CD4-positive, alpha-beta memory T cell (primary cell): ENCODE measurements at regions of chr14 and their contacts with region 1.

Region 1: DNA sequence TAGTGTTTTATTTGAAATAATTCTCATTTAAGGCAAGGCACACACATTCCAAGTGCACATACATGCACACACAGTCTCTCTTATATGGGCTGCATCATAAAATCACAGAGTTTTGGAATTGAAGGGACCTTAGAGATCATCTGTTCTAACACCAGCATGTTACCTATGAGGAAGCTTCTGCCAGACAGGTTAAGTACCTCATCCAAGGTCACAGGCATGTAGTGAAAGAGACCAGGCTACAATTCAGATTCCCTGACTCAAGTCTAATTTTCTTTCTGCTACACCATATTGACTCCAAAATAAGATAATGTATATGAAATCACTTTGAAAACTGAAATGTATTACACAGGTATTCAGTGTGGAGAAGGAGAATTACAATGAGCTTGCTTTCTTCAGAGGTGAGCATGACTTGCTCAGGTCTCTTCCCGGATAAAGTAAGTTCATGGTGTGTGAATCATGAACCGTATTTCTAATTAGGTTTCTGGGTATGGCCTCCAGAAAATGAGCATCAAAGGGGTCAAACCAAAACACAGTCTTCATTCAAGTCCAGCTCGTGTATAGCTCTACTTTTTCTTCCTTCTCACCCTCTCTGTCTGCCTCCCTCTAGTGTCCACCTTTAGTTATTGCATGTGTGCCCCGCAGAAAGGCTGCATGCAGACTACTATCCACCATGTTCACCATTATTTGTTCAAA is 411.9 kb downstream of the FUT8 start:
- DNase-seq: peak; percentile 62 to 70 (median 64)
- H3K4me3 ChIP-seq: no peak overlapping the region
- H3K4me3 Mint-ChIP-seq: peak overlapping the region in 1 of 8 donors; percentile 10
- H3K27ac ChIP-seq: no peak overlapping the region
- H3K27ac Mint-ChIP-seq: no peak overlapping the region
- H3K4me1 ChIP-seq: peaks cover 9% of the 10 kb centered on the region
- H3K4me1 Mint-ChIP-seq: peaks cover 10 to 14% (median 11%) of the 10 kb centered on the region in 4 donors
- H3K27me3 ChIP-seq: no peaks in the 10 kb centered on the region
- H3K27me3 Mint-ChIP-seq: no peaks in the 10 kb centered on the region

Region 2: DNA sequence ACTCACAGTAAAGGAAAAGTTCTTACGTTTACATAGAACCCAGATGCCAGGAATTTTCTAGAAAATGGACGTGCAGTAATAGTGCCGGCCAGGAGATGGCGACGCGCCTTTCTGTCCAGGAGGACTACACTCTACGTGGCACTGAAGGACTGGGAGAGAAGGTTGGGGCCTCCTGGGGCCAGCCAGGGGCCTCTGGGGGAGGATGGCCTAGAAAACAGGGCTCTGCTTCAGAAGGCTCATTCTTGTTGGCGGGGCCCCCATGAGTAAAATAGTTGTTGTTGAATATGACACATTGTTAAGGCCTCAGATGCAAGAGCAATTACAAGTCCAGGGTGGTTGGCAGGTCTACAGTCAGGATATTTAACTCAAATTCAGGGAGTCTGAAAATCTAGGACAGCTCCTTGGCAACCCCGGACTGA is 602.0 kb before region 1 on chr14:
- CTCF ChIA-PET with region 1: interaction called, 8 read pairs
- POLR2A ChIA-PET with region 1: no interaction called
- intact Hi-C with region 1: loop called (anchors 1 kb)
- DNase-seq: peak; percentile 45 to 55 (median 48)
- H3K4me3 ChIP-seq: no peak overlapping the region
- H3K4me3 Mint-ChIP-seq: peak overlapping the region in 1 of 8 donors; percentile 64
- H3K27ac ChIP-seq: no peak overlapping the region
- H3K27ac Mint-ChIP-seq: peak overlapping the region; percentile 0 to 83 (median 42)
- H3K4me1 ChIP-seq: peaks cover 34% of the 10 kb centered on the region
- H3K4me1 Mint-ChIP-seq: peaks cover 23 to 59% (median 38%) of the 10 kb centered on the region in 4 donors
- H3K27me3 ChIP-seq: no peaks in the 10 kb centered on the region
- H3K27me3 Mint-ChIP-seq: no peaks in the 10 kb centered on the region

Region 3: DNA sequence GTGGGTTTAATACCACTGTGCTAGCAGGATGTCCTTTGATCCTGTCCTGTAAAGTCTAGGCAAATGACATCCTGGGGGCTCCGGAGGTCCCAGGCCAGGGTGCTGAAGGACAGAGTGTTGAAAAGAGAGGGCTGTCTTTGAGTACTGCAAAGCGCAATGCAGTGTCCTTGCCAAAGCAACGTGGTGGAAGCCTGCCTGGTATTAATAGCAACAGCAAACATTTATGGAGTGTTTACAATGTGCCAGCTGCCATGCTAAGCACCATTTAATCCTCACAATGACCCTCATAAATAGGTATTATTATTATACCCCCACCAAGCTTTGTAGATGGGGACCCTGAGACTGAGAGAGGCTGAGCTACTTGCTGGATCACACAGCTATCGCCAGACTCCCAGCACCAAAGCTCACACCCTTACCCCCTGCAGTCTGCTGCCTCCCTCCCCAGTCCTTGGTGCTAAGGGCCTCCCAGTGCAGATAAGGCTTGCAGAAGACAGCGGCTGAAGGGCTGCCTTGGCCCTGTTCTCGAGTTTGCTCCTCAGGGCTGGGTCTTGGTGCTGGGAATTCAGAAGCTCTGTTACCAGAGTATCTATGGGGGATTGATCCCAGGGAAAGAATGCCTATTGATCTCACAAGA is 15.8 kb after region 1 on chr14:
- CTCF ChIA-PET with region 1: interaction called, 83 read pairs
- POLR2A ChIA-PET with region 1: interaction called, 3 read pairs
- intact Hi-C with region 1: no loop called
- DNase-seq: no peak
- H3K4me3 ChIP-seq: no peak overlapping the region
- H3K4me3 Mint-ChIP-seq: peak overlapping the region in 3 of 8 donors; percentile 25 to 43 (median 29)
- H3K27ac ChIP-seq: no peak overlapping the region
- H3K27ac Mint-ChIP-seq: peak overlapping the region in 1 of 7 donors; percentile 46
- H3K4me1 ChIP-seq: peaks cover 63% of the 10 kb centered on the region
- H3K4me1 Mint-ChIP-seq: peaks cover 55 to 85% (median 70%) of the 10 kb centered on the region in 4 donors
- H3K27me3 ChIP-seq: no peaks in the 10 kb centered on the region
- H3K27me3 Mint-ChIP-seq: no peaks in the 10 kb centered on the region

Region 4: GRCh38 chr14:65860956-65861611 is 36.7 kb after region 1 on chr14:
- CTCF ChIA-PET with region 1: interaction called, 14 read pairs
- POLR2A ChIA-PET with region 1: interaction called, 3 read pairs
- intact Hi-C with region 1: no loop called
- DNase-seq: peak in 4 of 5 donors; percentile 31 to 51 (median 38)
- H3K4me3 ChIP-seq: no peak overlapping the region
- H3K4me3 Mint-ChIP-seq: peak overlapping the region in 6 of 8 donors; percentile 0 to 74 (median 58)
- H3K27ac ChIP-seq: no peak overlapping the region
- H3K27ac Mint-ChIP-seq: peak overlapping the region; percentile 0 to 62 (median 14)
- H3K4me1 ChIP-seq: peaks cover 47% of the 10 kb centered on the region
- H3K4me1 Mint-ChIP-seq: peaks cover 45 to 65% (median 52%) of the 10 kb centered on the region in 4 donors
- H3K27me3 ChIP-seq: no peaks in the 10 kb centered on the region
- H3K27me3 Mint-ChIP-seq: no peaks in the 10 kb centered on the region

Region 5: GRCh38 chr14:65927931-65928356 is 103.5 kb after region 1 on chr14:
- CTCF ChIA-PET with region 1: interaction called, 55 read pairs
- POLR2A ChIA-PET with region 1: interaction called, 13 read pairs
- intact Hi-C with region 1: loop called (anchors 2 kb)
- DNase-seq: peak; percentile 66 to 78 (median 73)
- H3K4me3 ChIP-seq: peak overlapping the region in 1 of 2 donors; percentile 22
- H3K4me3 Mint-ChIP-seq: peak overlapping the region; percentile 45 to 81 (median 73)
- H3K27ac ChIP-seq: peak overlapping the region; percentile 42
- H3K27ac Mint-ChIP-seq: peak overlapping the region; percentile 81 to 96 (median 92)
- H3K4me1 ChIP-seq: peaks cover 55% of the 10 kb centered on the region
- H3K4me1 Mint-ChIP-seq: peaks cover 52 to 72% (median 64%) of the 10 kb centered on the region in 4 donors
- H3K27me3 ChIP-seq: no peaks in the 10 kb centered on the region
- H3K27me3 Mint-ChIP-seq: no peaks in the 10 kb centered on the region

Region 6: DNA sequence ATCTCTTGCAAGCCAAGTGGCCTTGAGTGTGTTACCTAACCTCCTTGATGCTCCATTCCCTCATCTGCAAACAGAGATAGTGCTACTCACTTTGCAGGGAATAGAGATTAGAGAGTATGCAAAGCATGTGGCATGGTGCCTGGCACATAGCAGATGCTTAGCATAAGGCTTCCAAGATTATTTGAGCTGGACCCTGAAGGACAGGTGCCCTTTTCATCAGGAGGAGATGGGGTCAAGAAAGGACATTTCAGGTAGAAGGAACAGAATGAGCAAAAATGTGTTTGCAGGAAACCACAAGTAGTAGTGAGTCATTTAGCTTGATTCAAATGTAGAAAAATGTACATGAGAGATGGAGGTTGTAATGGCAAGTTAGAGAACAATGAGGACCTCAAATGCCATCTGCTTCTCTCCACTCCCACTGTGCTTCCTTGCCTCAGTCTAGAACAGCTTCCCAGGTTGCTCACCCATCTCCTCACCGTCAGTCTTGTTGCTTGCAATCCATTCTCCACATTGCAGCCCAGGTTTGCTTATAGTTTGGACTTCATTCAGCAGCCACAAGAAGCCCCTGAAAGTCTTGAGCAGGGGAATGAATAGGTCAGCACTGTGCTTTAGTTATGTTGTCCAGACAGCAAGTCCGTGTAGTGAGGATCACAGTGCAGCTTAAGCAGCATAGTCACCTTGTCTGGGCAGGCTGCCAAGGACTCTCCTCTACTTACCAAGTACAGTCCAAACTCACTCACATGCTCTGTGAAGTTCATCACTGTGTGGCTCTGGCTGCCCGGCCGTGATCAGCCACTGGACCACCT is 125.5 kb after region 1 on chr14:
- CTCF ChIA-PET with region 1: interaction called, 182 read pairs
- POLR2A ChIA-PET with region 1: no interaction called
- intact Hi-C with region 1: no loop called
- DNase-seq: no peak
- H3K4me3 ChIP-seq: no peak overlapping the region
- H3K4me3 Mint-ChIP-seq: peak overlapping the region in 5 of 8 donors; percentile 17 to 67 (median 30)
- H3K27ac ChIP-seq: no peak overlapping the region
- H3K27ac Mint-ChIP-seq: peak overlapping the region in 6 of 7 donors; percentile 3 to 76 (median 64)
- H3K4me1 ChIP-seq: peaks cover 19% of the 10 kb centered on the region
- H3K4me1 Mint-ChIP-seq: peaks cover 17 to 59% (median 27%) of the 10 kb centered on the region in 4 donors
- H3K27me3 ChIP-seq: no peaks in the 10 kb centered on the region
- H3K27me3 Mint-ChIP-seq: no peaks in the 10 kb centered on the region